ENCODE measurements at regions of chr18 and their contacts with region 1.

Region 1: GRCh38 chr18:23689031-23689615 is at the start of gene LAMA3:
- DNase-seq: peak; percentile 81
- ATAC-seq: peak; percentile 67
- H3K4me3 ChIP-seq: peak within 1 kb of the TSS; percentile 87
- H3K27ac ChIP-seq: peak within 1 kb of the TSS; percentile 79
- H3K4me1 ChIP-seq: peaks cover 52% of the 10 kb centered on the region
- H3K27me3 ChIP-seq: no peaks in the 10 kb centered on the region
- CTCF ChIP-seq: no peak; the same call in 1 of the 2 replicates
- total RNA-seq, gene LAMA3: 217 and 224 TPM in 2 replicates

Region 2: DNA sequence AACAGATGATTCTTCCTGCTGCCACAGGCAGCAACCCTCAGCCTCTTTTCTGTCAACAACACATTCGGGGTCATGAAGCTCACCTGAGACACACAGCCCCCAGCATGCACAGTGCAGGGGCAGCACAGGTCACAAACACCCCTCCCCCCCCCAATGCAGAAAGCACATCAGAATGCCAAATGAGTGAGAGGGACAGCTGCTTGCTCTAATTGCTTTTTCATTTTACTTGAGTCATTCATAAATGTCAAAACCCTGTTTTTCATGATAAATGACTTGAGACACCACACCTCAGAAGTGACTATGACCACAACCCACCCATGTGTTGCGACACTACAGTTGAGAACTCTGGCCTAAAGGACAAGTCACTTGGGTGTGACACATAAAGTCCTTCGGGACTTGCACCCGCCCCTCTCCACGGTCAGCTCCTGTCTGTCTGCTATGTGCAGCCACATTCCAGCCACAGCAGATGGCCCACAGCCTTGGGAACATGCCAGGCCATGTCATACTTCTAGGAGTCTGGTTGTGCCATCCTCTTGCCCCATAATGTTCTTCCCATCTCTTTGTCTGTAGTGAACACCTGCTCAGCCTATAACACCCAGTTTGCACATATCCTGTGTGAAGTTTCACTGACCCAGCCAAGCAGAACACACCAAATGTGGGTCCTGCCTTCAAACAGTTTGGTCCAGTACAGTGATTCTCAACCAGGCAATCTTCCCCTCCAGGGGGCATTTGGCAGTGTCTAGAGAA is 266.3 kb before region 1 on chr18:
- CTCF ChIA-PET with region 1: no interaction called
- POLR2A ChIA-PET with region 1: no interaction called
- intact Hi-C with region 1: no loop called
- DNase-seq: peak; percentile 91
- ATAC-seq: peak; percentile 87
- H3K4me3 ChIP-seq: no peak overlapping the region
- H3K27ac ChIP-seq: peak overlapping the region; percentile 36
- H3K4me1 ChIP-seq: peaks cover 15% of the 10 kb centered on the region
- H3K27me3 ChIP-seq: no peaks in the 10 kb centered on the region
- CTCF ChIP-seq: no peak

Region 3: GRCh38 chr18:23605938-23606337 is 83.2 kb before region 1 on chr18:
- CTCF ChIA-PET with region 1: no interaction called
- POLR2A ChIA-PET with region 1: no interaction called
- intact Hi-C with region 1: no loop called
- DNase-seq: no peak
- ATAC-seq: no peak
- H3K4me3 ChIP-seq: no peak overlapping the region
- H3K27ac ChIP-seq: no peak overlapping the region
- H3K4me1 ChIP-seq: 0 out of 2 replicates have a peak, but pooled peaks cover 3% of the 10 kb centered on the region
- H3K27me3 ChIP-seq: no peaks in the 10 kb centered on the region
- CTCF ChIP-seq: no peak

Region 4: DNA sequence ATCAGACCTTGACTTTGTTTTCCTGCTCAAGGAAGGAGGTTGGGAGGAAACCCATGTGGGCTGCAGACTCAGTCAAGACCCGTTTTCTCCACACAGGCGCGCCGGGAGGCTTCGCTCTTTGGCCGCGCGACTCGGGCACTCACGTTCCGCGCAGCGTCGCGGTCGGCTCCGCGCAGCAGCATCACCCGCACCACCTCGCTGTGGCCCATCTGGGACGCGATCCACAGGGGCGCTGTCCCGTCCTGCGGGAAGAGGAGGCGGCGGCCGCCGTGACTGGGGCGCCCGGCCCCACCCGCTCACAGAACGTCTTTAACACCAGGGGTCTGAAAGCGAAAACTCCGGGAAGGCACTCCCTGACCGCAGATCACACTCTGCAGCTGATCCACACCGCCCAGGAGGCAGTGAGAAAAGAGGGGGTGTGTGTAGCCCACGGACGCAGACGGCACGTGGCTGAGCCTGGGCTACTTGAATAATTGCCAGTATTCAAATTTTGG is 69.7 kb before region 1 on chr18:
- CTCF ChIA-PET with region 1: interaction called, 3 read pairs
- POLR2A ChIA-PET with region 1: no interaction called
- intact Hi-C with region 1: loop called (anchors 1 kb)
- DNase-seq: no peak
- ATAC-seq: peak; percentile 21
- H3K4me3 ChIP-seq: no peak overlapping the region
- H3K27ac ChIP-seq: no peak overlapping the region
- H3K4me1 ChIP-seq: peaks cover 4% of the 10 kb centered on the region; the same call in 1 of the 2 replicates
- H3K27me3 ChIP-seq: no peaks in the 10 kb centered on the region
- CTCF ChIP-seq: no peak

Region 5: GRCh38 chr18:23629444-23629946 is 59.6 kb before region 1 on chr18:
- CTCF ChIA-PET with region 1: interaction called, 4 read pairs
- POLR2A ChIA-PET with region 1: interaction called, 3 read pairs
- intact Hi-C with region 1: loop called (anchors 1 kb)
- DNase-seq: peak; percentile 37
- ATAC-seq: peak; percentile 28
- H3K4me3 ChIP-seq: no peak overlapping the region
- H3K27ac ChIP-seq: peak overlapping the region; percentile 98
- H3K4me1 ChIP-seq: peaks cover 49% of the 10 kb centered on the region
- H3K27me3 ChIP-seq: no peaks in the 10 kb centered on the region
- CTCF ChIP-seq: no peak

Region 6: GRCh38 chr18:23662309-23663263 is 26.5 kb before region 1 on chr18 and contains the start of gene ANKRD29:
- CTCF ChIA-PET with region 1: no interaction called
- POLR2A ChIA-PET with region 1: interaction called, 12 read pairs
- intact Hi-C with region 1: no loop called
- DNase-seq: peak; percentile 65
- ATAC-seq: peak; percentile 80
- H3K4me3 ChIP-seq: peak within 1 kb of the TSS; percentile 97
- H3K27ac ChIP-seq: peak within 1 kb of the TSS; percentile 26; the same call in 1 of the 2 replicates
- H3K4me1 ChIP-seq: peaks cover 11% of the 10 kb centered on the region; the same call in 1 of the 2 replicates
- H3K27me3 ChIP-seq: no peaks in the 10 kb centered on the region
- CTCF ChIP-seq: no peak
- total RNA-seq, gene ANKRD29: 31.0 and 31.4 TPM in 2 replicates

Region 7: GRCh38 chr18:23668731-23669130 is 20.4 kb before region 1 on chr18:
- CTCF ChIA-PET with region 1: no interaction called
- POLR2A ChIA-PET with region 1: no interaction called
- intact Hi-C with region 1: loop called (anchors 2 kb)
- DNase-seq: peak; percentile 68
- ATAC-seq: peak; percentile 64
- H3K4me3 ChIP-seq: no peak overlapping the region
- H3K27ac ChIP-seq: no peak overlapping the region
- H3K4me1 ChIP-seq: peaks cover 17% of the 10 kb centered on the region
- H3K27me3 ChIP-seq: no peaks in the 10 kb centered on the region
- CTCF ChIP-seq: no peak

Region 8: DNA sequence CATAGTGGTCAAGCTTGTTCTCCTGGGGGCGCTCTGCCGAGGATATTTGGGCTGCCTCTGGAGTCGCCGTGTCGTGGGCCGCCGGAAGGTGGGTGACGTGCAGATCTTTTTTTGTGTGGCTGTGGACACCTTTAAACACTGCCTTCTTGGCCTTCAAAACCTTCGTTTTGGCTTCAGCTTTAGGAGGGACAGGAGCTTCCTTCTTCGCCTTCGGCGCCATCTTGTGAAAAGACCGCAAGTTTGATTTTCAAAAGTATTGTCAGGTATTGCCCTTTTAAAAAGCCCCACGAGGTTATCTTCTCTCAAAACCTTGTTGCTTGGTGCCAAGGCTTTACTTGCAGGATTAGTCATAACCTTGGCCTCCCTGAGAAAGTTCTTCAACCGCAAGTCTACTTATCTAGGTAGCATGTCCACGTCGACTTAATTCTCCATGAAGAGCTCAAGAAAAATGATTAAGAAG is 21.0 kb after region 1 on chr18:
- CTCF ChIA-PET with region 1: no interaction called
- POLR2A ChIA-PET with region 1: no interaction called
- intact Hi-C with region 1: no loop called
- DNase-seq: peak; percentile 89
- ATAC-seq: peak; percentile 80
- H3K4me3 ChIP-seq: peak overlapping the region; percentile 41; the same call in 1 of the 2 replicates
- H3K27ac ChIP-seq: peak overlapping the region; percentile 86
- H3K4me1 ChIP-seq: peaks cover 22% of the 10 kb centered on the region
- H3K27me3 ChIP-seq: no peaks in the 10 kb centered on the region
- CTCF ChIP-seq: 0 out of 2 replicates have a peak, but pooled peaks have one; percentile 21

Measured in PC-3 (cell line).